Activated T-helper 2 cell treated with anti-CD3 and anti-CD28 coated beads, Interferon-gamma antibody, Interleukin-2, Interleukin-4, amounts not matched to agents 10 μg/mL and 5 μg/mL and 100 μg/mL, durations not matched to agents 14 hours and 24 hours and 36 hours (primary cell): ENCODE measurements at regions of chr3 and their contacts with region 1.

Region 1: DNA sequence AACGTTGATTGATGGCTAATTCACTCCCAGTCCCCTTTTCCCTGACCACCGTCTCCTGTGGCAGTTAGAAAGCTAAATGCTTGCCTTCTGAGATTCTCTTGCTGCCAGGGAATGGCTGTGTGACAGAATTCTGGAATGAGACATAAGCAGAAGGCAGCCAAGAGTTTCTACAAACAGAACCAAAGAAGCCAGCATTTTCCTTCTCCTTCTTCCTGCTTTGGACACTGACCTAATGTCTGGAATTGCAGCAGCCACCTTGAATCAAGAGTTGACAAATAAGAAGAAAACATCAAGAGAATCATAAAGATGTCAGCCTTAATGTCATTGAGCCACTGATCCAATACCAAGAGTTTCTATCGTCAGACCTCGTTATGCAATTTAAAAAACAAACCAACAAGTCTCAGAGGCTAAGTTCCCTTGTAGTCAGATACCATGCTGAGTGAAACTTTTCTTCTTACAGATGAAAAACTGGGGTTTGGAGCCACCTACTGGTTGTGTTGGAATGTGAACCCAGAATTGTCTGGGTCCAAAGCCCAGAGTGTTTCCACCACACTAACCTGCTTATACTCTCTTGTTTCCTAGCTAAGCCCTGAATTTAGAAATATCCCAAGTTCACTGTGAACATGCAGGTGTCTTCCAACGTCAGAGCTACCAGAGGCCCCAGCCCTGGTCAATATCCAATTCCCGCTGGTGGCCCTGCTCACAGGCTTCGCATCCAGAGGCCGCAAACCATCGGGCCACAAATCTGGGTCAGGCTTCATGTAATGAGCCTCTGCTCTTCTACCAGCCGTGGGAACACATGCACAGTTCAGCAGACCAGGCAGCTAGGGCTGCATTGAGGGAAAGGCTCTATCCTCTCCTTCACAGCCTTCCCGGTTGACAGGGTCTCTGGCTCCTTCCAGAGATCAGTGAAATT is 42.5 kb downstream of the MCF2L2 start:
- DNase-seq: peak; percentile 33
- H3K4me3 Mint-ChIP-seq: no peak overlapping the region
- H3K27ac Mint-ChIP-seq: no peak overlapping the region
- H3K4me1 Mint-ChIP-seq: peaks cover 21% of the 10 kb centered on the region
- H3K27me3 Mint-ChIP-seq: no peaks in the 10 kb centered on the region

Region 2: GRCh38 chr3:183178629-183179549 is 207.1 kb before region 1 on chr3:
- intact Hi-C with region 1: loop called (anchors 1 kb)
- DNase-seq: no peak
- H3K4me3 Mint-ChIP-seq: peak overlapping the region; percentile 79
- H3K27ac Mint-ChIP-seq: no peak overlapping the region
- H3K4me1 Mint-ChIP-seq: peaks cover 11% of the 10 kb centered on the region
- H3K27me3 Mint-ChIP-seq: peaks cover 35% of the 10 kb centered on the region

Region 3: DNA sequence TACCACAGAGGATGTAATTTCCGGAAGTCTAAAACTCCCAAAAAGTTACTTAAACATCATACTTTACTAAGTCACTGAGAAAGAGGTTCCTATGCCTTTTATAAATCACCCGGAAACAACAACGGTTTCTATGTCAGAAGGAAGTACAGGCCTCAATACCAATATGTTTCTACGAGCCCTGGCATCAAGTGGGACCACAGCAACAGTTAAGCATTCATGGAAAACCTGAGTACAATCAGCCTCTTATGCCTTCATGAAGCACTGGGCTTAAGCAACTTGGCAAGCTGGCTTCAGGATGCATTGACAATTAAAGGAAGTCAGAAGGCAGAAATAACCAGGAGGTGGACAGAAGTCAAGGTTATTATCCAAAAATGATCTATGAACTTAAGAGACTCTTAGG is 152.0 kb before region 1 on chr3:
- intact Hi-C with region 1: no loop called
- DNase-seq: no peak
- H3K4me3 Mint-ChIP-seq: no peak overlapping the region
- H3K27ac Mint-ChIP-seq: no peak overlapping the region
- H3K4me1 Mint-ChIP-seq: peaks cover 6% of the 10 kb centered on the region
- H3K27me3 Mint-ChIP-seq: no peaks in the 10 kb centered on the region

Region 4: DNA sequence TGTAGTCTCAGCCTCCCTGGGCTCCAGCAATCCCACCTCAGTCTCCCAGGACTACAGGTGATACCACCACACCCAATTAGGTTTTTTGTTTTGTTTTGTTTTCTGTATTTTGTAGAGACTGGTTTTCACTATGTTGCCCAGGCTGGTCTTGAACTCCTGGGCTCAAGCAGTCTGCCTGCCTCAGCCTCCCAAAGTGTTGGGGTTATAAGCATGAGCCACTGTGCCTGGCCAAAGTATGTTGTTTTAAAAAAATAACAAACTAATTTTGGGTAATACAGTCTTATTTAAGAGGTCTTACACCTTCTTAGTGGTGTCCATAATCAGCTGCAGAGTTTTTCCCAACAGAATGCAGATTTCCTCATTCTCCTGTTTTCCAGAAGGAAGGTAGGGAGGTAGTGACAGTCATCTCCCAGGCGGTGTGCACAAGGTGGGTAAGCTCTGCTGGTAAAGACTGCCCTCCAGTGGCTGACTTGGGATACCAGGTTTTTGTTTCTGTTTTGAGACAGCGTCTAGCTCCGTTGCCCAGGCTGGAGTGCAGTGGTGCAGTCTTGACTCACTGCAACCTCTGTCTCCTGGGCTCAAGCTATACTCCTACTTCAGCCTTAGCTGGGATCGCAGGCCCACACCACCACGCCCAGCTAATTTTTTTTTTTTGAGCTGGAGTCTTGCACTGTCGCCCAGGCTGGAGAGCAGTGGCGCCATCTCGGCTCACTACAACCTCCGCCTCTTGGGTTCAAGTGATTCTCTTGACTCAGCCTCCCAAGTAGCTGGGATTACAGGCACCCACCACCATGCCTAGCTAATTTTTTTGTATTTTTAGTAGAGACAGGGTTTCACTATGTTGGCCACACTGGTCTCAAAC is 381.0 kb after region 1 on chr3:
- intact Hi-C with region 1: loop called (anchors 5 kb)
- DNase-seq: peak; percentile 63
- H3K4me3 Mint-ChIP-seq: no peak overlapping the region
- H3K27ac Mint-ChIP-seq: peak overlapping the region; percentile 7
- H3K4me1 Mint-ChIP-seq: peaks cover 6% of the 10 kb centered on the region
- H3K27me3 Mint-ChIP-seq: no peaks in the 10 kb centered on the region